ENCODE measurements at regions of chr7 and their contacts with region 1.

Region 1: DNA sequence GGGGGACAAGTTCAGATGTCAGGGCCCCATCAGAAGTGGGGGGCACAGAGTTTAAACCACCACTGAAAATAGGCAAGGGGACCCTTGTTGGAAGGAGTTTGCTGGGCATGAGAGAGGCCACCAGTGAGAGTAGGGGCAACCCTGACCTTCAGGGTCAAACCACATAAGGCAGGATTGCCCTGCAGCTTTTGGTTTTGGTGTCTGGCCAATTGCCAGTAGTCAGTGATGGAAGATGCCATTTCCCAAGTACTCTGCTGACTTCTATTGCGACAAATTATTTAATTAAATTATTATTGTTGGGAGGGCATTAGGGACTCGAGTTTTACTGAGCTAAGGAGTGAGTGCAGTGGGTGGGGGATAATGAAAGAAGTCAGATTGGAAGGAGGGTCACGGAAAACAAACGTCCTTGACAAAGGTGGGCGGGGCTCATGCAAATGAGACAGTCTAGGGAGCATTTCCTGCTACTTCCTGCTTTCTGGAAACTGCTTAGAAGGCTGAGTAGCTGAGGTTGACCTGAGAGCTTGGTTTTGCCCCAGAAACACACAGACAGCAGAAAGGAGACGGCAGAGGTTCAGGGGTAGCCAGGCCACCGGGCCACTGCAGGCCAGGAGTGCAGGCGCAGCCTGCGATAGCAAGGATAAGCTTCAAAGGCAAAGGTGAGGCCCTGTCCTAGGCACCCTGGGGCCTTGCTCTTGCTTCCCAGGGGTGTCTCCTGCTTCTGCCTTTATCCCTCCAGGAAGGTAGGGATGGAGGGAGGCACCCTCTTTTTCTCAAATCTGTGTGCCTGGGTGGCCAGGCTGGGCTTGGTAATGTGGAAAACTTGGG is 74.1 kb upstream of the ANLN start:
- DNase-seq: no peak
- H3K4me3 Mint-ChIP-seq: no peak overlapping the region
- H3K27ac Mint-ChIP-seq: no peak overlapping the region
- H3K4me1 Mint-ChIP-seq: no peaks in the 10 kb centered on the region
- H3K27me3 Mint-ChIP-seq: no peaks in the 10 kb centered on the region

Region 2: GRCh38 chr7:36303202-36304098 is 12.1 kb before region 1 on chr7:
- CTCF ChIA-PET with region 1: interaction called, 21 read pairs
- POLR2A ChIA-PET with region 1: no interaction called
- intact Hi-C with region 1: no loop called
- DNase-seq: no peak
- H3K4me3 Mint-ChIP-seq: no peak overlapping the region
- H3K27ac Mint-ChIP-seq: no peak overlapping the region
- H3K4me1 Mint-ChIP-seq: no peaks in the 10 kb centered on the region
- H3K27me3 Mint-ChIP-seq: no peaks in the 10 kb centered on the region

Region 3: GRCh38 chr7:36336390-36336789 is 20.9 kb after region 1 on chr7:
- CTCF ChIA-PET with region 1: interaction called, 21 read pairs
- POLR2A ChIA-PET with region 1: no interaction called
- intact Hi-C with region 1: no loop called
- DNase-seq: no peak
- H3K4me3 Mint-ChIP-seq: no peak overlapping the region
- H3K27ac Mint-ChIP-seq: no peak overlapping the region
- H3K4me1 Mint-ChIP-seq: no peaks in the 10 kb centered on the region
- H3K27me3 Mint-ChIP-seq: peaks cover 2% of the 10 kb centered on the region